CD8-positive, alpha-beta T cell (primary cell): ENCODE measurements at regions of chr9 and their contacts with region 1.

Region 1: GRCh38 chr9:127586537-127586936 is 25.5 kb upstream of the STXBP1 start:
- DNase-seq: peak; percentile 26 to 78 (median 64)
- ATAC-seq: peak; percentile 62
- H3K4me3 ChIP-seq: no peak overlapping the region
- H3K4me3 Mint-ChIP-seq: no peak overlapping the region
- H3K27ac ChIP-seq: no peak overlapping the region
- H3K27ac Mint-ChIP-seq: no peak overlapping the region
- H3K4me1 ChIP-seq: no peaks in the 10 kb centered on the region
- H3K4me1 Mint-ChIP-seq: peaks cover 3% of the 10 kb centered on the region
- H3K27me3 ChIP-seq: no peaks in the 10 kb centered on the region
- H3K27me3 Mint-ChIP-seq: peaks cover 13% of the 10 kb centered on the region
- CTCF ChIP-seq: peak; percentile 57

Region 2: DNA sequence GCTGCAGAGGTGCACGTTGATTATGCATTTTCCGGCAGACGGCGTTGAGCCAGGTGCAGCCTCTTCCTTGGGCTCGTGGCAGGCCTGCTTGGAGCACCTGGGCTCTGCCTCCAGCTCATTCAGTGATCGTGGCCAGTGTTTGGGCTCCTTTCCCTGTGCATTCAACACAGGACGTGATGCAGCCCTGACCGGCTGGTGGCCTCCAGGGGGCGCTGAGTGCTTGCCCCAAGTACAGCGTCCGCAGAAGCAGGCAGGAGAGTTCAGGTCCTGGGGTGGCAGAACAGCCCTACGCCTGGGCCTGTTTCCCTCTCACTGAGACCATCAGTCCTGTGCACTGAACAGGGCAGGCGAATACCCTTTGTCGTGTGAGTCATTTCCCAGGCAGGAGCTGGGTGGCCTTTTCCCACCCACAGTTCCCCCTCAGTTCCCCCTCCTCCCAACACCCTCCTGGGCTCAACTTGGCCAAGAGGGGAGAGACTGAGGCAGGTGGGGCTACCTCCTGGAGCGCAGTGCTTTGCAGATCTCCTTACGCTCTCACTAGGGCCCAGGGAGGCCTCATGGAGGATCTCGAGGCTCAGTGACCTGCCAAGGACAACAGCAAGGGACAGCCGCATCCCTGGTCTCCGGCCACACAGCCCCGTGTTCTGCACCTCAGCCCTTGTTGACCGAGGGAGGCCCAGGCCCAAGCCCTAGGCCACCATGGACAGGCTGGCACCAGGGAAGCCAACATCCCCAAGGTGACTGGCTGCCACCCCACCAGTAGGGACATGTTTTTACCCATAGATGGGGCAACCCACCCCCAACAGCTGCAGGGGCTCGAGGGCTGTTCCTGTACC is 82.4 kb before region 1 on chr9:
- CTCF ChIA-PET with region 1: interaction called, 106 read pairs
- POLR2A ChIA-PET with region 1: no interaction called
- intact Hi-C with region 1: loop called in 1 of 2 experiments (anchors 1 kb)
- DNase-seq: peak; percentile 57 to 89 (median 82)
- ATAC-seq: peak; percentile 93
- H3K4me3 ChIP-seq: no peak overlapping the region
- H3K4me3 Mint-ChIP-seq: no peak overlapping the region
- H3K27ac ChIP-seq: no peak overlapping the region
- H3K27ac Mint-ChIP-seq: no peak overlapping the region
- H3K4me1 ChIP-seq: no peaks in the 10 kb centered on the region
- H3K4me1 Mint-ChIP-seq: no peaks in the 10 kb centered on the region
- H3K27me3 ChIP-seq: no peaks in the 10 kb centered on the region
- H3K27me3 Mint-ChIP-seq: no peaks in the 10 kb centered on the region
- CTCF ChIP-seq: peak; percentile 66

Region 3: GRCh38 chr9:127548352-127548881 is 38.1 kb before region 1 on chr9:
- CTCF ChIA-PET with region 1: interaction called, 10 read pairs
- POLR2A ChIA-PET with region 1: no interaction called
- intact Hi-C with region 1: no loop called
- DNase-seq: no peak
- ATAC-seq: no peak
- H3K4me3 ChIP-seq: no peak overlapping the region
- H3K4me3 Mint-ChIP-seq: no peak overlapping the region
- H3K27ac ChIP-seq: no peak overlapping the region
- H3K27ac Mint-ChIP-seq: no peak overlapping the region
- H3K4me1 ChIP-seq: no peaks in the 10 kb centered on the region
- H3K4me1 Mint-ChIP-seq: peaks cover 3% of the 10 kb centered on the region
- H3K27me3 ChIP-seq: no peaks in the 10 kb centered on the region
- H3K27me3 Mint-ChIP-seq: no peaks in the 10 kb centered on the region
- CTCF ChIP-seq: no peak

Region 4: GRCh38 chr9:127611899-127612790 is 25.6 kb after region 1 on chr9 and contains the start of gene STXBP1:
- CTCF ChIA-PET with region 1: interaction called, 26 read pairs
- POLR2A ChIA-PET with region 1: interaction called, 9 read pairs
- intact Hi-C with region 1: no loop called
- DNase-seq: peak; percentile 70 to 92 (median 83)
- ATAC-seq: peak; percentile 80
- H3K4me3 ChIP-seq: peak within 1 kb of the TSS; percentile 59 to 82
- H3K4me3 Mint-ChIP-seq: peak within 1 kb of the TSS; percentile 93
- H3K27ac ChIP-seq: peak within 1 kb of the TSS in 1 of 2 experiments; percentile 42
- H3K27ac Mint-ChIP-seq: peak within 1 kb of the TSS; percentile 92
- H3K4me1 ChIP-seq: peaks cover 32% of the 10 kb centered on the region
- H3K4me1 Mint-ChIP-seq: peaks cover 36% of the 10 kb centered on the region
- H3K27me3 ChIP-seq: peaks cover 4 to 9% of the 10 kb centered on the region in 2 experiments
- H3K27me3 Mint-ChIP-seq: peaks cover 9% of the 10 kb centered on the region
- CTCF ChIP-seq: no peak
- total RNA-seq, gene STXBP1: 7.7 to 8.9 TPM